PC-9 (cell line): ENCODE measurements at regions of chr2 and their contacts with region 1.

Region 1: GRCh38 chr2:215619022-215619958 is 183.4 kb upstream of the FN1 start:
- DNase-seq: peak; percentile 74 to 95
- H3K4me3 ChIP-seq: peak overlapping the region; percentile 31; the same call in 1 of the 2 replicates
- H3K27ac ChIP-seq: peak overlapping the region; percentile 59
- H3K4me1 ChIP-seq: peaks cover 37% of the 10 kb centered on the region
- H3K27me3 ChIP-seq: no peaks in the 10 kb centered on the region
- CTCF ChIP-seq: no peak

Region 2: GRCh38 chr2:215465246-215465645 is 154.0 kb before region 1 on chr2:
- CTCF ChIA-PET with region 1: no interaction called
- POLR2A ChIA-PET with region 1: interaction called, 17 read pairs
- intact Hi-C with region 1: no loop called
- DNase-seq: peak in 1 of 2 experiments; percentile 57
- H3K4me3 ChIP-seq: no peak overlapping the region
- H3K27ac ChIP-seq: no peak overlapping the region
- H3K4me1 ChIP-seq: peaks cover 14% of the 10 kb centered on the region; the same call in 1 of the 2 replicates
- H3K27me3 ChIP-seq: no peaks in the 10 kb centered on the region
- CTCF ChIP-seq: no peak

Region 3: DNA sequence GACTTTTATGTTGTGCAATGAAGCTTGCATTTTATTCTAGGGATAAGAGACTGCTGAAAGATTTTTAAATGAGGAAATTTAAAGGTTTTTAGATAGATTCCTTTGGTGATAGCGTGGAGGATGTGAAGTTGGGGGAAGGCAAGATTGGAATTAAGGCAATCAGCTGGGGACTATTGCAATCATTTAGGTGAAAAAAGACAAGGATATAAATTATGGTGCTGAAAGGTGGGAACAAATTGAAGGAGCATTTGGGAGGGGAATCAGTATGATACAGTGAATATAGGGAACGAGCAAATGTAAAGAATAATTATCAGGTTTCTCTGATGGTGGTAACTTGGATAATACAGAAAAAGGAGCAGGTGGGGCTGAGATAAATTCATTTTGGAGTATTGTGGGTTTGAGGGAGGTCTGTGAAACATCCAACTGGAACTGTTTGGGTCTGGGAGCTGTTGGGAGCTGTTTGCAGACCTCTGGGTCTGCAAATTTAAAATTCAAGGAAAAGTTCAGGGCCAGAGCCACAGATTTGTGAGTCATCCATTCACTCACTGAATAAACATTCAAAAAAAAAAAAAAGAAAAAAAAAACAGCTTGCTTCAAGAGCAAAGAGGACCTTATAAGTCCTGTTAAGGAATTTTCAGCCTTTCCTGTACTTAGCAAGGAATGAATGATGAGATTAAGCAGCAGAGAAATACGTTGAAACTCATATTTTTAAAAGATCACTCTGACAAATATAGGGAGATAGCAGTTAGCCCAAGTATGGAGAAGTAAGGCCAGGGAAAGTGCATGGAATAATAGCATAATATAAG is 74.1 kb after region 1 on chr2:
- CTCF ChIA-PET with region 1: no interaction called
- POLR2A ChIA-PET with region 1: interaction called, 9 read pairs
- intact Hi-C with region 1: loop called (anchors 2 kb)
- DNase-seq: peak in 1 of 2 experiments; percentile 88
- H3K4me3 ChIP-seq: 0 out of 2 replicates have a peak overlapping the region, but pooled peaks have one; percentile 12
- H3K27ac ChIP-seq: peak overlapping the region; percentile 53
- H3K4me1 ChIP-seq: peaks cover 31% of the 10 kb centered on the region
- H3K27me3 ChIP-seq: no peaks in the 10 kb centered on the region
- CTCF ChIP-seq: no peak

Region 4: DNA sequence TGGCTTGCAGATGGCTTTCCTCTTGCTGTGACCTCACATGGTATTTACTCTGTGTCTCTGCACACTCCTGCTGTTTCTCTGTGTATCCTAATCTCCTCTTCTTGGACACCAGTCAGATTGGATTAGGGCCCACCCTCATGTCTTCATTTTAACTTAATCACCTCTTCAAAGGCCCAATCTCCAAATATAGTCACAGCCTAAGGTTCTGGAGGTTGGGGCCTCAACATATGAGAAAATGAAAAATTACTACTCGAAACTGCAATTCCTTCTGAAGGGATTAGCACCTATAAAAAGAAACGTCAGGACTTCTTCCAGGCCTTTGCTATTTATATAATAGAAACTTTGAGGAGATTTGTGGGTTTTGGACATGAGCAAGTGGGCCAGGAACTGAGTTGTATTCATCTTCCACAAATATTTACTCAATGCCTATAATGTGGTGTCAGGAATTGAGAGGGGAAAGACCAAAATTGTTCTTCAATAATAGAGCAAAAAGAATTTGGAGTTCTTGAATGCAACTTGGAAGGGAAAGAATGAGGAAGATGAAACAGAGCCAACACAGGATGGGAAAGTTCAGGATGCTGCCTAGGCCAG is 86.6 kb after region 1 on chr2:
- CTCF ChIA-PET with region 1: no interaction called
- POLR2A ChIA-PET with region 1: no interaction called
- intact Hi-C with region 1: no loop called
- DNase-seq: no peak
- H3K4me3 ChIP-seq: no peak overlapping the region
- H3K27ac ChIP-seq: no peak overlapping the region
- H3K4me1 ChIP-seq: 0 out of 2 replicates have a peak, but pooled peaks cover 2% of the 10 kb centered on the region
- H3K27me3 ChIP-seq: no peaks in the 10 kb centered on the region
- CTCF ChIP-seq: no peak

Region 5: GRCh38 chr2:215878482-215879055 is 259.3 kb after region 1 on chr2:
- CTCF ChIA-PET with region 1: no interaction called
- POLR2A ChIA-PET with region 1: no interaction called
- intact Hi-C with region 1: loop called (anchors 1 kb)
- DNase-seq: peak; percentile 35 to 92
- H3K4me3 ChIP-seq: peak overlapping the region; percentile 10; the same call in 1 of the 2 replicates
- H3K27ac ChIP-seq: peak overlapping the region; percentile 74
- H3K4me1 ChIP-seq: peaks cover 29% of the 10 kb centered on the region
- H3K27me3 ChIP-seq: no peaks in the 10 kb centered on the region
- CTCF ChIP-seq: no peak

Region 6: DNA sequence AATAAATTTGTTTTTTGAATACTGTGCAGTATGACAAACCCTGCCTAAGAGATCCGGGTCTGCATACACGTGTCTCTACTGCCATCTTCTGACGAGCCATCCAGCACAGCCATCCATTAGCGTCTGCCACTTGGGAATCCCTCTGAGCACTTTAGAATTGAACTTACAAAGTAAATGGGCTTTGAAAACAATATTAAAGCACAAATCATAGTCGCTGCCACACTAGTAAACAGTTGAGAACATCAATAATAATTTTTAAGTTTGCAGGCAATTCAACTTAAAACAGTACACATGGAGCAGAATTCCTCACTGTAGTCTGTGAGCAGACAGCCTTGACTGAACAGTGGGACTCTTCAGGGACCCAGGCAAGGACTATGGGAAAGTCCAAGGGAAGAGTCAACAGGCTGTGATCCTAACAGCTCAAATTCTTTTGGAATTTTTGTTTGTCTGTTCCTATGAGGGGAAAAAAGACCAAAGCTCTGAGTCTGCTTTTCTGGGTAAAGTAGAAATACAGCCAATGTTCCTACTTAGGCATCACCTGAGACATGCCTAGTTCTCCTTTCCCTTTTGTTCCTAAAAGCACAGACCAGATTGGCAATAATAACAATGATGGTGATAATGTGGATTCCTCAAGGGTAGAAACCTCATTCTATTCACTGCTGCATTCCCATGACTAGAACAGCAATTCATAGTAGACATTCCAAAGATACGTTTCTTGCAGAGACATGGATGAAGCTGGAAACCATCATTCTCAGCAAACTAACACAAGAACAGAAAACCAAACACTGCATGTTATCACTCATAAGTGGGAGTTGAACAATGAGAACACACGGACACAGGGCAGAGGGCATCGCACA is 301.2 kb after region 1 on chr2:
- CTCF ChIA-PET with region 1: no interaction called
- POLR2A ChIA-PET with region 1: no interaction called
- intact Hi-C with region 1: loop called (anchors 1 kb)
- DNase-seq: peak; percentile 61 to 69
- H3K4me3 ChIP-seq: no peak overlapping the region
- H3K27ac ChIP-seq: no peak overlapping the region
- H3K4me1 ChIP-seq: peaks cover 16% of the 10 kb centered on the region
- H3K27me3 ChIP-seq: no peaks in the 10 kb centered on the region
- CTCF ChIP-seq: peak; percentile 93

Region 7: GRCh38 chr2:216862628-216863398 is 1243.5 kb after region 1 on chr2:
- CTCF ChIA-PET with region 1: no interaction called
- POLR2A ChIA-PET with region 1: no interaction called
- intact Hi-C with region 1: no loop called
- DNase-seq: no peak
- H3K4me3 ChIP-seq: no peak overlapping the region
- H3K27ac ChIP-seq: no peak overlapping the region
- H3K4me1 ChIP-seq: peaks cover 3% of the 10 kb centered on the region; the same call in 1 of the 2 replicates
- H3K27me3 ChIP-seq: no peaks in the 10 kb centered on the region
- CTCF ChIP-seq: no peak